Esophagus muscularis mucosa (tissue), 4 donors: ENCODE measurements at regions of chr1 and their contacts with region 1.

Region 1: GRCh38 chr1:160085686-160086455 is 4.5 kb downstream of the KCNJ9 start:
- DNase-seq: peak; percentile 95
- H3K4me3 ChIP-seq: no peak overlapping the region
- H3K27ac ChIP-seq: peak overlapping the region; percentile 4 to 57 (median 42)
- H3K4me1 ChIP-seq: peaks cover 7 to 22% (median 15%) of the 10 kb centered on the region in 4 donors
- H3K27me3 ChIP-seq: peaks cover 0 to 38% (median 23%) of the 10 kb centered on the region in 4 donors
- CTCF ChIP-seq: peak; percentile 80 to 94 (median 81)
- EP300 ChIP-seq: no peak
- POLR2A ChIP-seq: no peak

Region 2: DNA sequence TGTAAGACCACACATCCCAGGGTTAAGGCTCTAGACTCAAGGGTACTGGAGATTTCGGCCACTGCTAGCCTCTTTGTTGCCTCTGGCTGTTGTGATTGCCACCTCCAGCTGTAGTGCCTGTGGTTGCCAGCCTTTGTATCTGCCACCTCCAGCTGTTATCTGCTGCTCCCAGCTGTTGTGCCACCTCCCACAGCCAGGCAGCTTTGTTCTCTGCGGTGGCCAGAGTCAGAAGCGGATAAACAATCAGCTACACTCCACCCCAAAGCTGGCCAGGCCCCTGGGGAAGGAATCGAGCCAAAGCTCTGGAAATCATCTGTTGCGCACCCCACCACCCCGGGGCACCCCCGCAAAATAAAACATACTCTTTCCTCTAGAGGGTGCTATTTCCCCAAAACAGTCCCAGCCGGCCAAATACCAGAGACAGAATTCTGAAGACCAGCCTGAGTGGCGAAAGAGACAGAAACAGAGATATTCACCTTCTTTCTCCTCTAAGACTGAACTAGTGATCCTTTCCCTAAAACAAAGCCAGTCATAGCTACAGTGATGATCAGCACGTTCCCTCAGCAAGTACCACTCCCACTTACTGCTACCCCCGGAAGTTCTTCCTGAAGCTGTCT is 39.3 kb before region 1 on chr1:
- intact Hi-C with region 1: loop called (anchors 2 kb)
- DNase-seq: no peak
- H3K4me3 ChIP-seq: peak overlapping the region in 3 of 4 donors; percentile 6 to 26 (median 8)
- H3K27ac ChIP-seq: no peak overlapping the region
- H3K4me1 ChIP-seq: peaks cover 9 to 16% (median 14%) of the 10 kb centered on the region in 4 donors
- H3K27me3 ChIP-seq: no peaks in the 10 kb centered on the region
- CTCF ChIP-seq: peak; percentile 58 to 71 (median 60)
- EP300 ChIP-seq: no peak
- POLR2A ChIP-seq: no peak

Region 3: DNA sequence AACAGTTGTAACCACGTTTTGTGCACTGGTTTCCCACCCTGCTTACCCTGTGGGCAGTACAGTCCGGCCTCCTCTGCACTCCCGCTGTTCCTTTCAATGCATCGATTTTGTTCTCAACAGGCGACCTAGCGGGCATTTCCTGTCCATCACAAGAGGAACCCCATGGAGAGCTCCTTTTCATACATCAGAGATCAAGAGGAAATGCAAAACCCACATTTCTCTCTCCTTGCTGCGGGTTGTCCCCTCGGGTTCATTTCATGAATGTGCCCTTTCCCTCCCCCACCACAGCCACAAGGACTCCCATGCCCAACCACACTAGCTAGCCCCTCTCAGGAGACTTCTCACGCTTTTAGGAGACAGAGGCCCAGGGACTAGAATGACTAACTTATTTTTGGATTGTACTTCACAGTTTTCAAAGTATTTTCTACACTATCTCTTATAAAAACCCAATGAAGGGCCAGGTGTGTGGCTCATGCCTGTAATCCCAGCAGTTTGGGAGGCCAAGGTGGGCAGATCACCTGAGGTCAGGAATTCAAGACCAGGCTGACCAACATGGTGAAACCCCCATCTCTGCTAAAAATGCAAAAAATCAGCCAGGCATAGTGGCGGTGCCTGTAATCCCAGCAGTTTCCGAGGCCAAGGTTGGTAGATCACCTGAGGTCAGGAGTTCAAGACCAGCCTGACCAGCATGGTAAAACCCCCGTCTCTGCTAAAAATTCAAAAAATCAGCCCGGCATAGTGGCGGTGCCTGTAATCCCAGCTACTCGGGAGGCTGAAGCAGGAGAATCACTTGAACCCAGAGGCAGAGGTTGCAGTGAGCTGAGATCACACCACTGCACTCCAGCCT is 83.9 kb after region 1 on chr1:
- intact Hi-C with region 1: no loop called
- DNase-seq: no peak
- H3K4me3 ChIP-seq: no peak overlapping the region
- H3K27ac ChIP-seq: no peak overlapping the region
- H3K4me1 ChIP-seq: no peaks in the 10 kb centered on the region
- H3K27me3 ChIP-seq: no peaks in the 10 kb centered on the region
- CTCF ChIP-seq: no peak
- EP300 ChIP-seq: no peak
- POLR2A ChIP-seq: no peak

Region 4: DNA sequence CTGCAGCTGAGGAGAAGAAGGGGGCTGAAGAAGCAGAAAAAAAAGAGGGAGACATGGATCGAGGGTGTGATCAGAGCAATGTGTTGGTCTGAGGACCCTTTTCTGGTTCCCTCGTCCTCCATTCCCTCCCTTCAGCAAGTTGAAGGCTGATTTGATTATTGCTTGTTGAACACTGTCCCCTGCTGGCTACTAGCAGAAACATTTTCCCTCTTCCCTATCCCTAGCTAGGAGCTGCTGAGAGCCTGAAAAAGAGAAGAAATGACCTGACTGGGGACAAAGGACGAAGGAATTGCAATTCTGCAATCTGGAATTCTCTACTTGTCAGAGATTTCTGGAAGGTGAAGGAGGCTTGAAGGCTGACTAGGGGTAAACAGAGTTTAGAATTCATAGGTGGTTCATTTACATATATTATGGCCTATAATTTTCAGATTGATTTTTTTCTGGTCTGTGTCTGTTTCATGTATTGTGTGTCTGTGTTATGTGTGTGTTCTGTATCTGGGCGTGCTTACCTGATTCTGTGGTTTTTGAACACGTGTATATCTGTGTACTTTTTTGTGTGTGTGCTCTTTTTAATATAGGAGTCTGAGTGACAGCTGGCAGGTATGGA is 290.8 kb after region 1 on chr1:
- intact Hi-C with region 1: loop called (anchors 10 kb)
- DNase-seq: no peak
- H3K4me3 ChIP-seq: peak overlapping the region in 1 of 4 donors; percentile 3
- H3K27ac ChIP-seq: peak overlapping the region in 3 of 4 donors; percentile 59 to 68 (median 63)
- H3K4me1 ChIP-seq: peaks cover 6 to 22% (median 20%) of the 10 kb centered on the region in 4 donors
- H3K27me3 ChIP-seq: peaks cover 0 to 17% (median 5%) of the 10 kb centered on the region in 4 donors
- CTCF ChIP-seq: peak; percentile 75 to 90 (median 81)
- EP300 ChIP-seq: no peak
- POLR2A ChIP-seq: no peak